ENCODE measurements at regions of chr4 and their contacts with region 1.

Region 1: GRCh38 chr4:33864290-33864859 is 2379.9 kb downstream of the ARAP2 start:
- DNase-seq: no peak
- ATAC-seq: no peak
- H3K4me3 ChIP-seq: no peak overlapping the region
- H3K27ac ChIP-seq: no peak overlapping the region
- H3K4me1 ChIP-seq: no peaks in the 10 kb centered on the region
- H3K27me3 ChIP-seq: no peaks in the 10 kb centered on the region
- CTCF ChIP-seq: no peak

Region 2: DNA sequence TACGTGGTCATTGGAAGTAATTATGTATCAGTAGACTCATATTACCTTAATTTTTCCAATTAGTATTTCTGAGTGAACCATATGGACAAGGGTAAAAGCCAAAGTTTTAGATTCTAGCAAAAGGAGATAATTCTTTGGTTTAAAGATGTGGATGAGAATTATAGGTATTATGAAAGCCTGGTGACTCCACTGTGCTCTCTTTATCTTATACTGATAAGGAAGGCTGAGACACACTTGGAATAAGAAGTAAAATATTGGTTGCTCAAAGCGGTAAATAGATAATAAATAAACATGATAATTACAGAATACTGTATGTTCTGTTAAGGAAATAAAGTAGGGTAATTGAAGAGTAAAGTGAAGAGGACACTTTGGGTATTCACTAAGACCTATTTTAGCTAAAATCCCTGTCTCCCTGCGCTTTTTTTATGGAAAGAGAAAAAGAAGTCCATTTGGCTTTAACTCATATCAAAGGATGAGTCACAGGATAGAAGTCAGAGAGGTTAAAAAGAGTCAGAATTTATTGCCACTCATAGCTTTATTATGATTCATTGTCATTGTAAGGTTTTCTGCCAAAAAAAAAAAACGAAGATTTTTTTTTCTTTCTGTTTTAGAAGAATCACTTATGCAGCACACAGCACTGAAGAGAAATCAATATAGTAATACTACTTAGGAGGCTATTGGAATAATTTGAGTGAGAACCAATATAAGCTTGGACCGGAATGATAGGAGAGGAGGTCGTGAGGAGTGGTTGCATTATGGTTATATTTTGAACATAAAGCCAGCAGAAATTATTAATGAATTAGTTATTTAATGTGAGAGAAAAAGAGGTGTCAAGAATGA is 83.2 kb before region 1 on chr4:
- CTCF ChIA-PET with region 1: no interaction called
- POLR2A ChIA-PET with region 1: interaction called, 15 read pairs
- in situ Hi-C with region 1: no loop called
- intact Hi-C with region 1: no loop called
- DNase-seq: no peak
- ATAC-seq: no peak
- H3K4me3 ChIP-seq: no peak overlapping the region
- H3K27ac ChIP-seq: no peak overlapping the region
- H3K4me1 ChIP-seq: no peaks in the 10 kb centered on the region
- H3K27me3 ChIP-seq: no peaks in the 10 kb centered on the region
- CTCF ChIP-seq: no peak

Measured in Panc1 (cell line).